CD14-positive monocyte (primary cell): ENCODE measurements at regions of chr4 and their contacts with region 1.

Region 1: GRCh38 chr4:123396307-123397143 is at the start of gene SPRY1:
- DNase-seq: peak; percentile 51 to 76 (median 69)
- H3K4me3 ChIP-seq: peak within 1 kb of the TSS; percentile 48 to 78 (median 53)
- H3K4me3 Mint-ChIP-seq: peak within 1 kb of the TSS; percentile 91 to 97
- H3K27ac ChIP-seq: no peak within 1 kb of the TSS
- H3K27ac Mint-ChIP-seq: peak within 1 kb of the TSS in 6 of 7 donors; percentile 19 to 88 (median 76)
- H3K4me1 ChIP-seq: peaks cover 33 to 41% of the 10 kb centered on the region in 2 donors
- H3K4me1 Mint-ChIP-seq: peaks cover 33% of the 10 kb centered on the region
- H3K27me3 ChIP-seq: peaks cover 14 to 38% of the 10 kb centered on the region in 2 donors
- H3K27me3 Mint-ChIP-seq: peaks cover 34 to 44% (median 35%) of the 10 kb centered on the region in 3 donors
- CTCF ChIP-seq: no peak
- polyA plus RNA-seq, gene SPRY1: 1.1 to 3.7 (median 2.0) TPM

Region 2: GRCh38 chr4:122448936-122449335 is 947.6 kb before region 1 on chr4:
- intact Hi-C with region 1: no loop called
- DNase-seq: no peak
- H3K4me3 ChIP-seq: no peak overlapping the region
- H3K4me3 Mint-ChIP-seq: no peak overlapping the region
- H3K27ac ChIP-seq: no peak overlapping the region
- H3K27ac Mint-ChIP-seq: no peak overlapping the region
- H3K4me1 ChIP-seq: no peaks in the 10 kb centered on the region
- H3K4me1 Mint-ChIP-seq: no peaks in the 10 kb centered on the region
- H3K27me3 ChIP-seq: no peaks in the 10 kb centered on the region
- H3K27me3 Mint-ChIP-seq: peaks cover 0 to 3% (median 1%) of the 10 kb centered on the region in 3 donors
- CTCF ChIP-seq: no peak

Region 3: DNA sequence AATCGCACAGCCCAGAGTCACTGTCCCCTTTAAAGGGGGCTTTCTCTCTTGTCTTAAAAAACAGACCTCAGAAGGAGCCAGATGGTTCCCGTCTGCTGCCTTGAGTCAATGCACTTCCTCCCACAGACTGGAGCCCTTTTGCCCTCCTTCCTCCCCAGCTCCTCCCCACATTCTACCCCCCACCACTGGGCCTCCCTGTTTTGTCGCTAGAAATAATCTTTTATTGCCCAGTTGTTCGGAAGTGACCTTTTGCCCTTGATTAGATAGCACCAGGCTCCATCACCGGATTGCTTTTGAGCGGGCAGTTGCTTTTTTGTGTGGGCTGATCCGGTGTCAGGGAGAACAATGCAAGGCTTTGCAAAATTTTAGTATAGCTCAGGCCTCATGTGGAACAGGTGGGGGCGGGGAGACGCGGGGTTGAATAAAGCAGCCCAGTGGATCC is 47.8 kb after region 1 on chr4:
- intact Hi-C with region 1: loop called in 1 of 2 experiments (anchors 10 kb)
- DNase-seq: peak; percentile 35 to 39 (median 35)
- H3K4me3 ChIP-seq: peak overlapping the region in 1 of 3 experiments; percentile 65
- H3K4me3 Mint-ChIP-seq: peak overlapping the region; percentile 62 to 82
- H3K27ac ChIP-seq: peak overlapping the region in 1 of 2 donors; percentile 36
- H3K27ac Mint-ChIP-seq: peak overlapping the region in 6 of 7 donors; percentile 37 to 86 (median 56)
- H3K4me1 ChIP-seq: peaks cover 16 to 19% of the 10 kb centered on the region in 2 donors
- H3K4me1 Mint-ChIP-seq: peaks cover 22% of the 10 kb centered on the region
- H3K27me3 ChIP-seq: peaks cover 0 to 2% of the 10 kb centered on the region in 2 donors
- H3K27me3 Mint-ChIP-seq: peaks cover 2 to 10% (median 6%) of the 10 kb centered on the region in 3 donors
- CTCF ChIP-seq: no peak

Region 4: DNA sequence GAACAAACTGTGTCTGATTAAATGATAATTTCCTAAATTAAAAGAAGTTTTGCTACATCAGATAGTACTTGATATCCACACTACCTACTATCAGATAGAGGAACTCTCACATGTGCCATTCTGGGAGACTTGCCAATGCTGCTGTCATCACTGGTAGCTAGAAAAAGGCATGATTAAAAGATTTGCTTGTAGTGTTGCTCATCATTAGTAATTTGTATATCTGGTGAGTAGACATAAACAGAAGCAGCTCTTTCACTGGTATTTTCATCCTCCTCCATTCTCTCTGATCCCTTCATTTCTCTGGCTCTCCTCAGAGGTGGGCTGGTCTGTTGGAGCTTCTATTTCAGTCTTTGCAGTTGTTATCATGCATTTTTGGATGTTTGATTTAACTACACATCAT is 56.1 kb after region 1 on chr4:
- intact Hi-C with region 1: loop called (anchors 5 to 10 kb)
- DNase-seq: peak; percentile 89 to 92 (median 92)
- H3K4me3 ChIP-seq: no peak overlapping the region
- H3K4me3 Mint-ChIP-seq: no peak overlapping the region
- H3K27ac ChIP-seq: peak overlapping the region in 1 of 2 donors; percentile 45
- H3K27ac Mint-ChIP-seq: peak overlapping the region; percentile 34 to 96 (median 85)
- H3K4me1 ChIP-seq: peaks cover 33 to 37% of the 10 kb centered on the region in 2 donors
- H3K4me1 Mint-ChIP-seq: peaks cover 37% of the 10 kb centered on the region
- H3K27me3 ChIP-seq: peaks cover 4 to 6% of the 10 kb centered on the region in 2 donors
- H3K27me3 Mint-ChIP-seq: peaks cover 5 to 25% (median 12%) of the 10 kb centered on the region in 3 donors
- CTCF ChIP-seq: no peak

Region 5: DNA sequence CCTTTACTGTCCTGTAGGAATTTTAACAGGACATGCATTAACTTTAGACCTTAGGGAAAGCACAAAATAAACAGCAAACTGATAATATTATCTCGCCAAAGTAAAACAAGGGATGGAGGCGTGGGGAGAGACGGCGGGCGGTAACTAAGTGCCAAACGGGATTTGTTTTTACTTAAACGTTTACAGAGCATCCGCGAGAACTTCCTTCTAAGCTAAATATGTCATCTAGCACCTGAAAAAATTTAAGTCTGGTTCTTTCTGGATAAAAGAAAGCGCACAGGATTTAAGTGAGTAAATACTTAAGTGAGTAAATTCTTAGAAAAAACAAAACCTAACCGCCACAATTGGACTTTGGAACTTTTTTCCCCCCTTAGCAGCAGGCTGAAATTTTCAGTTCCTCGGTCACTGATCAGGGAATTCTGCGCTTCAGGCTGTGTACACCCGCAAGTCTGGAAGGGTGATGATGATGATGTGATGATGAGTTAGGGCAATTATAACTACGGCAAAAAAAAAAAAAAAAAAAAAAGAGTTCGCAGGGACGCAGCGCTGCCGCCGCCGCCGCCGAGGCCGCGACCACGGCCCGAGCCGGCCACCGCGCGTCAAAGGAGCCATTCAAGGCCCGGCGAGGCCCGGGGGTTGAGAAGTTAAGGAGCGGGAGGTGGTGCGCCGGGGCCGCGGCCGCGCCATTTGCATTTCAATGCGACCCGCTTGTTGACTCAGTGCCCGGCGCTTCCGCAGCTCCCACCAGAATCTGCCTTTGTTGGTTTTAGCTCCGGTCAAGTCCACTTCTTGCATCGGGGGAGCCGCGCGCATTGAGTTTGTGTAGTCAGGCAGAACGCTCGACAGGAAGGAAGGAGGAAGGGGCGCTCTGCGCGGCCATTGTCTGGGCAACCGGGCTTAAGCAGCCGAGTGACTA is 108.8 kb after region 1 on chr4:
- intact Hi-C with region 1: loop called in 1 of 2 experiments (anchors 10 kb)
- DNase-seq: peak; percentile 32 to 47 (median 37)
- H3K4me3 ChIP-seq: peak overlapping the region; percentile 30 to 74 (median 33)
- H3K4me3 Mint-ChIP-seq: peak overlapping the region; percentile 91 to 97
- H3K27ac ChIP-seq: no peak overlapping the region
- H3K27ac Mint-ChIP-seq: peak overlapping the region in 4 of 7 donors; percentile 66 to 90 (median 78)
- H3K4me1 ChIP-seq: peaks cover 9 to 14% of the 10 kb centered on the region in 2 donors
- H3K4me1 Mint-ChIP-seq: peaks cover 16% of the 10 kb centered on the region
- H3K27me3 ChIP-seq: peaks cover 3 to 17% of the 10 kb centered on the region in 2 donors
- H3K27me3 Mint-ChIP-seq: peaks cover 14 to 21% (median 20%) of the 10 kb centered on the region in 3 donors
- CTCF ChIP-seq: no peak

Region 6: GRCh38 chr4:123661080-123661737 is 264.7 kb after region 1 on chr4:
- intact Hi-C with region 1: loop called in 1 of 2 experiments (anchors 5 kb)
- DNase-seq: peak in 1 of 3 donors; percentile 11
- H3K4me3 ChIP-seq: no peak overlapping the region
- H3K4me3 Mint-ChIP-seq: no peak overlapping the region
- H3K27ac ChIP-seq: no peak overlapping the region
- H3K27ac Mint-ChIP-seq: no peak overlapping the region
- H3K4me1 ChIP-seq: no peaks in the 10 kb centered on the region
- H3K4me1 Mint-ChIP-seq: peaks cover 3% of the 10 kb centered on the region
- H3K27me3 ChIP-seq: no peaks in the 10 kb centered on the region
- H3K27me3 Mint-ChIP-seq: peaks cover 4 to 6% (median 5%) of the 10 kb centered on the region in 3 donors
- CTCF ChIP-seq: peak; percentile 67

Region 7: DNA sequence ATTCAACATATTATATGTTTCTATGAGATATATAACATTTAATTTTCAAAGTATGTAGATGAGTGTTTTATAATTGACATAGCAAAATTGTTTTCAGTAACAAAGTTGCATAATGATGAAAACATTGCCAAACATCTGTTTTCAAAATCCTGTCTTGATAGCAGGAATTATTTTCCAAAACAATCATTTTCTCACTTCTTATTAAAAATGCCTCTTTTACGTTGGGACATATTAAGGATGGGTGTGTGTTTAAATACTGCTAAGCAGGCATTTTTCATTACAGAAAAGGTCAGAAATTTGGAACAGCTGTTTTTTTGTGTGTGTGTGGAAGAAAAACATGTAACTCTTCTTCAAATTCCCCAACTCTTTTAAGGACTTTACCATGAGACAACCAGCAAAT is 452.1 kb after region 1 on chr4:
- intact Hi-C with region 1: no loop called
- DNase-seq: no peak
- H3K4me3 ChIP-seq: no peak overlapping the region
- H3K4me3 Mint-ChIP-seq: no peak overlapping the region
- H3K27ac ChIP-seq: no peak overlapping the region
- H3K27ac Mint-ChIP-seq: no peak overlapping the region
- H3K4me1 ChIP-seq: no peaks in the 10 kb centered on the region
- H3K4me1 Mint-ChIP-seq: no peaks in the 10 kb centered on the region
- H3K27me3 ChIP-seq: no peaks in the 10 kb centered on the region
- H3K27me3 Mint-ChIP-seq: peaks cover 0 to 2% (median 0%) of the 10 kb centered on the region in 3 donors
- CTCF ChIP-seq: no peak